HEK293 (cell line): ENCODE measurements at regions of chr2 and their contacts with region 1.

Region 1: GRCh38 chr2:38750891-38751595 is at the start of gene SRSF7:
- H3K4me3 ChIP-seq: peak within 1 kb of the TSS; percentile 84
- H3K27ac ChIP-seq: peak within 1 kb of the TSS; percentile 97
- H3K4me1 ChIP-seq: peaks cover 5% of the 10 kb centered on the region; the same call in 1 of the 2 replicates
- CTCF ChIP-seq: peak; percentile 73

Region 2: GRCh38 chr2:38384338-38384737 is 366.7 kb before region 1 on chr2:
- CTCF ChIA-PET with region 1: no interaction called
- POLR2A ChIA-PET with region 1: no interaction called
- H3K4me3 ChIP-seq: no peak overlapping the region
- H3K27ac ChIP-seq: no peak overlapping the region
- H3K4me1 ChIP-seq: peaks cover 7% of the 10 kb centered on the region
- CTCF ChIP-seq: no peak

Region 3: DNA sequence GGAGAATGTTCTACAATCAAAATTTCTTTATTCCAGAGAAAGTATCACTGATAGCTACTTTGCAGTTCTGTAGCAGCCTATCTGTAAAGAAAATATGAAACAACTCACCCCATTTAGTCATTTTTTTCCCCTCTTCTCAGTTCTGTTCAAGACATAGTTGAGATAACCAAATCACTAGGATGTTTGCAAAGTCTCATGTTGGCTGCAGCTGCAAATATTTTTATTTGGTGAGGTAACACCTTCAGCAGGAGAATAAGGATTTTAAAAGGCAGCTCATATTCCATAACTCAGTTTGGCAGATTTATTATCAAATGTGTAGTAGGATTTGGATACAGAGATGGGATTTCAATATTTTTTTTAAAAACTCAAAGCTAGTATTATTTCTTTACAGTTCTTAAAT is 189.4 kb before region 1 on chr2:
- CTCF ChIA-PET with region 1: no interaction called
- POLR2A ChIA-PET with region 1: interaction called, 14 read pairs
- H3K4me3 ChIP-seq: no peak overlapping the region
- H3K27ac ChIP-seq: no peak overlapping the region
- H3K4me1 ChIP-seq: no peaks in the 10 kb centered on the region
- CTCF ChIP-seq: no peak

Region 4: DNA sequence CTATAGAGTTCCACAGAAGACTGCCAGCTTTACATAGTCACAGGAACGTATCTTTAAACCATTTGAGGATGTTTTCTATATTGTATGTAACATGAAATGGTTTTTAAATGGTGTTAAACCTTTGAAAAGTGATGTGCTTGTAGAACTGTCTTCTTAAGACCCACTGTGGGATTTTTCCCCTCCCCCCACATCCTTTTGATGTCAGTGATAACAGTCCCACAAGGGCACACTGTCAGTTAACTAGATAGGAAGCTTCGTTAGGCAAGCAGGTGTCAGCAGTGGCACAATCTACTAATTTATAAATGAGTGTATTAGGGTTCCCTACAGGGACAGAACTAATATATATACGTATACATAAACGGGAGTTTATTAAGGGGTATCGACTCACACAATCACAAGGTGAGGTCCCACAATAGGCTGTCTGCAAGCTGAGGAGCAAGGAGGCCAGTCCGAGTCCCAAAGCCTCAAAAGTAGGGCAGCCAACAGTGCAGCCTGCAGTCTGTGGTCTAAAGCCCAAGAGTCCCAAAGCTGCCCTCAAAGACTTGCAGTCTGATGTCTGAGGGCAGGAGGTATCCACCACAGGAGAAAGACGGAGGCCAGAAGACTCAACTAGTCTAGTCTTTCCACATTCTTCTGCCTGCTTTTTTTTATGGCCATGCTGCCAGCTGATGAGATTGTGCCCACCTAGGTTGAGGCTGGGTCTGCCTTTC is 124.6 kb before region 1 on chr2:
- CTCF ChIA-PET with region 1: no interaction called
- POLR2A ChIA-PET with region 1: interaction called, 11 read pairs
- H3K4me3 ChIP-seq: no peak overlapping the region
- H3K27ac ChIP-seq: no peak overlapping the region
- H3K4me1 ChIP-seq: no peaks in the 10 kb centered on the region
- CTCF ChIP-seq: no peak

Region 5: GRCh38 chr2:38765149-38765548 is 14.1 kb after region 1 on chr2:
- CTCF ChIA-PET with region 1: interaction called, 3 read pairs
- POLR2A ChIA-PET with region 1: interaction called, 71 read pairs
- H3K4me3 ChIP-seq: no peak overlapping the region
- H3K27ac ChIP-seq: no peak overlapping the region
- H3K4me1 ChIP-seq: no peaks in the 10 kb centered on the region
- CTCF ChIP-seq: no peak

Region 6: GRCh38 chr2:38797276-38797675 is 46.2 kb after region 1 on chr2:
- CTCF ChIA-PET with region 1: interaction called, 3 read pairs
- POLR2A ChIA-PET with region 1: interaction called, 85 read pairs
- H3K4me3 ChIP-seq: no peak overlapping the region
- H3K27ac ChIP-seq: no peak overlapping the region
- H3K4me1 ChIP-seq: no peaks in the 10 kb centered on the region
- CTCF ChIP-seq: no peak

Region 7: DNA sequence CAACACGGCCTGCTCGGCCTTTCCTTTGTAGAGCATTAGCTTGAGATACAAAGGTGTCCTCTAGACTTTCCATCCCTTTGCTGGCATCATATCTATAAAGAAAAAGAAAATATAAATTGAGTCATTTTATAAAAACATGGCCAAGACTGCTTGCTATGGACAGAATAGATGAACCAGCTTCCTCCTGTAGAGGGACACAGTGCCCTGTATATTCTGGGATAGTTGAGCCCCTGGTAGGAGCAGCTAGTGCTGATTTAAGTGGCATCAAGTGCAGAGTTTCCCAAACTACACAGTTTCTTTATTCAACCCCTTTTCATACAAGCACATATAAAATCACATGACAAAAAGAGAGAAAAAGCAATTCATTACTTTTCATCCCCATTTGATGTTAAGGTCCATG is 74.9 kb after region 1 on chr2:
- CTCF ChIA-PET with region 1: interaction called, 4 read pairs
- POLR2A ChIA-PET with region 1: interaction called, 14 read pairs
- H3K4me3 ChIP-seq: no peak overlapping the region
- H3K27ac ChIP-seq: no peak overlapping the region
- H3K4me1 ChIP-seq: no peaks in the 10 kb centered on the region
- CTCF ChIP-seq: no peak

Region 8: GRCh38 chr2:38935568-38936172 is 184.6 kb after region 1 on chr2:
- CTCF ChIA-PET with region 1: no interaction called
- POLR2A ChIA-PET with region 1: no interaction called
- H3K4me3 ChIP-seq: no peak overlapping the region
- H3K27ac ChIP-seq: no peak overlapping the region
- H3K4me1 ChIP-seq: no peaks in the 10 kb centered on the region
- CTCF ChIP-seq: no peak

Region 9: DNA sequence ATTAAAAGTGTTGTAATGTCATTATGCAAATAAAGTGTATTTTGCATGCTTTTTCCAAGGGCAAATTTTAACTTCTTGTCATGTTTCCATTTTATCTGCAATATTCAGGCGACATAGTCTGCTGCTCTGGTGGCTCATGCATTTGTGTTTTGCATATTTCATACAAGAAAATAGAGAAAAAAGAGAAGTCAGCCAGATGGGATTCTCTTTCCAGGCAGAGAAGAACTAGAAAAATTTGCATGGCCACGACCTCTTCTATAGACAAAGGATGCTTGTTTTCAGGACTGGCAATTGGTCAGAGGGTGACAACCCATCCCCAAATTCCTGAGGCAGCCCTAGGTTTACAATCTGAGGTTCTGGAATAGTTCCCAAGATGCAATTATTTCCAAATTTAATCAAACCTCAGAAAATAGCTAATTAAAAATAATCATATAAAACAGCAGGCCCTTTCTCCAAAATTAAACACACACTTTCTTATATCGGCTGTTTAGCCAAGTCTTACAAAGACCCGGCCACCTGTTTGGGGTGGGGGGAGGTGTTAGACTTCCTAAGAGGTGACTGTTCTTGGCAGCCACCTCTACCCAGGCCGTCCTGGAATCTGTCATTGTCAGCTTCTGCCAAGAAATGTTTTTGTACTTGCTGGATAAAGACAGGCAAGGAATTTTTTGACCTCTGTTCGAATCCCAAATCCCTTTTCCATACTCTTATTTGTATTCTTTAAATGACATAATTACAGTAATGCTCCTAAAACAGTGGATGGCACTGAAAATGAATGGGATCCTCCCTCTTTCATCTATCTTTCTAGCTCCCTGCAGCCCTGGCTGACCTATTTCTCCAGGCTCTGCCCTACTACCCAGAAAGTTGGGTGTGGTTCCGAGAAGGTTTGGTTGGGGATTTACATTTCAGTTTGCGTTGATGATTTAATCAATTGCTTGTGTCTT is 390.6 kb after region 1 on chr2:
- CTCF ChIA-PET with region 1: no interaction called
- POLR2A ChIA-PET with region 1: no interaction called
- H3K4me3 ChIP-seq: no peak overlapping the region
- H3K27ac ChIP-seq: no peak overlapping the region
- H3K4me1 ChIP-seq: peaks cover 10% of the 10 kb centered on the region
- CTCF ChIP-seq: no peak